ENCODE measurements at regions of chr14 and their contacts with region 1.

Region 1: DNA sequence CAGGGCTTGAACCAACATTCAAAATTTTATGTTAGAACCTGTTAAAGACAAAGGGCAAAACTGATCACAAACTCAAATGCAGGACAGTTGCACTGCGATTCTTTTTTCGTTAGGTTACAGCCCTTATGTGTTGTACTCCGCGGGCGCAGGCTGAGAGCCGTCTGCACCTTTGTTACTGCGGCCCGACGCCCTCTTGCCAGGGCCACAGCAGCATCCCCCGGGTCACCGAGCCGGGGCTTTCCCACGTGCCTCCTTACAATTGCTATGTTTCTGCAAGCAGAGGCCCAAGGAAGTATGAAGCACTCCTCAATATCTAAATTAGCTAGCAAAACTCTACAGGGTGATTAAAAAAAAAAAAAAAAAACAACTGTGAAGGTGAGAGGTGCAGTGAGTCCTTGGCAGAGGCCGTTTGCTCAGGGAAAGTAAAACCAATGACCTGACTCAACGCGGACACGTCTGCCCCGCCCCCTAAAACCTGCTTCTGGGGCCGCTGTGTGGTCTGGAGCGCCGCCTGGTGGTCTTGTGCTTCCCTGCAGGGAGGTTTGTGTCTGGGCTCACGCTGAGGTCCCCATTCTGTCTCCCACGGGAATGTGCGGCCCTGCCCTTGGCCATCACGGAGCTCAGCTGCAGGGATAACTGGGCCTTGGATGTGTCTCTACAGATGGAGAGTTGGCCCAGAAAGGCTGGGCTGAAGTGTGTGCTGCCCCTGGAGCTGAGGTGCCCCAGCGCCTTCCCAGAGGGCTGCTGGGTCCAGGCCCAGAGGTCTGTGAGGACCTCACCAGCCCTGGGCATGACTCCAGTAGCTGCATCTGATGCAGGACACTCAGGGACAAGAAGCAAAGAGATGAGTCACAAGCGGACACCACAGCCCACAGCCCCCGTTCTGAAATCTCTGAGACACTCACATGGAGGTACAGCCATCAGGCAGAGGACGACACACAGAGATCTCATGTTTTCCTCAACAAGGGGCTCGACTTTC is 418.5 kb downstream of the TMEM121 start:
- DNase-seq: peak; percentile 73
- ATAC-seq: peak; percentile 83
- H3K4me3 ChIP-seq: no peak overlapping the region
- H3K27ac ChIP-seq: no peak overlapping the region
- H3K4me1 ChIP-seq: no peaks in the 10 kb centered on the region
- H3K27me3 ChIP-seq: peaks cover 3% of the 10 kb centered on the region; the same call in 1 of the 2 replicates
- CTCF ChIP-seq: peak; percentile 77

Region 2: GRCh38 chr14:104794641-104795467 is 1150.1 kb before region 1 on chr14:
- CTCF ChIA-PET with region 1: no interaction called
- POLR2A ChIA-PET with region 1: no interaction called
- intact Hi-C with region 1: no loop called
- DNase-seq: peak; percentile 26
- ATAC-seq: peak; percentile 37
- H3K4me3 ChIP-seq: peak overlapping the region; percentile 77
- H3K27ac ChIP-seq: no peak overlapping the region
- H3K4me1 ChIP-seq: peaks cover 17% of the 10 kb centered on the region
- H3K27me3 ChIP-seq: no peaks in the 10 kb centered on the region
- CTCF ChIP-seq: no peak; the same call in 1 of the 2 replicates

Region 3: GRCh38 chr14:105554022-105554421 is 390.9 kb before region 1 on chr14:
- CTCF ChIA-PET with region 1: no interaction called
- POLR2A ChIA-PET with region 1: no interaction called
- intact Hi-C with region 1: loop called (anchors 10 kb)
- DNase-seq: no peak
- ATAC-seq: no peak
- H3K4me3 ChIP-seq: no peak overlapping the region
- H3K27ac ChIP-seq: no peak overlapping the region
- H3K4me1 ChIP-seq: no peaks in the 10 kb centered on the region
- H3K27me3 ChIP-seq: no peaks in the 10 kb centered on the region
- CTCF ChIP-seq: no peak

Region 4: DNA sequence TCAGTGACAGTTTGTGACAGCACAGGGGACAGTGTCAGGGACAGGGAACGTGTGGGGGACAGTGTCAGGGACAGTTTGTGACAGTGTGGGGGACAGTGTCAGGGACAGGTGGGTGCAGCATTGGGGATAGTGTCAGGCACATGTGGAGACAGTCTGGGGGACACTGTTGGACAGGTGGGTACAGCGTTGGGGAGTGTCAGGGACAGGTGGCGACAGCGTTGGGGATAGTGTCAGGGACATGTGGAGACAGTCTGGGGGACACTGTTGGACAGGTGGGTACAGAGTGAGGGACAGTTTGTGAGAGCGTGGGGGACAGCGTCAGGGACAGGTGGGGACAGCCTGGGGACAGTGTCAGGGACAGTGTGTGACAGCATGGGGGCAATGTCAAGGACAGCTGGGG is 278.5 kb before region 1 on chr14:
- CTCF ChIA-PET with region 1: no interaction called
- POLR2A ChIA-PET with region 1: no interaction called
- intact Hi-C with region 1: loop called (anchors 10 kb)
- DNase-seq: no peak
- ATAC-seq: no peak
- H3K4me3 ChIP-seq: no peak overlapping the region
- H3K27ac ChIP-seq: no peak overlapping the region
- H3K4me1 ChIP-seq: no peaks in the 10 kb centered on the region
- H3K27me3 ChIP-seq: no peaks in the 10 kb centered on the region
- CTCF ChIP-seq: no peak

Region 5: DNA sequence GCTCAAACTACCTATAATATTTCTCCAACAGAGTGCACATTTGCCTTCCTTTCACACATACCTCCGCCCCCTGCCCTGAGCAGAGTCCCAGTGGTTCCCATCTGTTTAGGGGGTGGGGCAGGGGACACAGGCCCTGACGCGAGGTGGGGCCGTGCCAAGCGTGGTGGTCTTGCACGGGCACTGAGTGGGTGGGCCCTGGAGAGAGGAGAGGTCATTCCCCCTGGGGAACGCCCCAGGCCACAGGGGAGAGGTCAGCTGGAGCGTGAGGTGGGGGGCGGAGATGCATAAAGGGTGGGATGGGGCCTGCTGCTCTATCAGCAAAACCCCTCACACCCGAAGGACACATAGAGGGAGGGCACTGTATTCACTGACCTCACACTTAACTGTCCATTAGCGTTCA is 23.4 kb after region 1 on chr14:
- CTCF ChIA-PET with region 1: no interaction called
- POLR2A ChIA-PET with region 1: no interaction called
- intact Hi-C with region 1: no loop called
- DNase-seq: no peak
- ATAC-seq: no peak
- H3K4me3 ChIP-seq: no peak overlapping the region
- H3K27ac ChIP-seq: no peak overlapping the region
- H3K4me1 ChIP-seq: no peaks in the 10 kb centered on the region
- H3K27me3 ChIP-seq: peaks cover 6% of the 10 kb centered on the region
- CTCF ChIP-seq: no peak

Measured in PC-3 (cell line).